Activated B cell treated with CpG ODN at 0.5 μM for 24 hours (primary cell): ENCODE measurements at regions of chr12 and their contacts with region 1.

Region 1: DNA sequence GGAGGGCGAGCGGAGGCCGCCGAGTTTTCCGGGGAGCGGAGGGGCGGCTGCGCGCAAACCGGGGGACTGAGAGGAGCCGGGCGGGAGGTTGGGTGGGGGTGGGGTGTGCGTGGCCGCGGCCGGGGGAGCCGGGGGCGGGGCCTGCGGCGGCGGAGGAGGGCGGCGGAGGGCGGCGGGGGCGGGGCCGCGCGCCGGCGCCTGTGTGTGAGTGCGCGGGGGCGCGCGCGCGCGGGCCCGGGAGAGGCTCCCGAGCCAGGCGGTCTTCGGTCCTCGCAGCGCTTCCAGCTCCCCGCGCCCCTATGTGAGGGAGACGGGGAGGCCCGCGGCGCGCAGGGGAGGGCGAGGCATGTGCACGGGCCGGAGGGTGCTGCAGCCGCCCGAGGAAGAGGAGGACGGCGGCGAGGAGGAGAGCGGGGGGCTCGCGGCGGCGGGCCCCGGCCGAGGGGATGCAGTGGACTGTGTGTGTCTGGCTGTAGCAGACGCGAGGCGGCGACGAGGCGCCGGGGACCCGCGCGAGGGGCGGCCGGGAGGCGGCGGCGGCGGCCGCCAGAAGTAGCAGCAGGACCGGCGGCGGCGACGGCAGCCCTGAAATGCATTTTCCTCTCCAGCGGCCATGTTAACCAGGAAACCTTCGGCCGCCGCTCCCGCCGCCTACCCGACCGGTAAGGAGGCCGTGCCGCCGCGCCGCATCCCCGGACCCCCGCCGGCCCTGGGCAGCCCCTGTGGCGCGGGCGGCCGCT is at the start of gene DYRK2:
- DNase-seq: peak; percentile 78
- ATAC-seq: peak; percentile 64
- H3K4me3 Mint-ChIP-seq: peak within 1 kb of the TSS; percentile 97
- H3K27ac Mint-ChIP-seq: peak within 1 kb of the TSS; percentile 87
- H3K4me1 Mint-ChIP-seq: peaks cover 33% of the 10 kb centered on the region
- H3K27me3 Mint-ChIP-seq: no peaks in the 10 kb centered on the region
- CTCF ChIP-seq: no peak
- total RNA-seq, gene DYRK2: 37.6 and 40.3 TPM in 2 replicates

Region 2: GRCh38 chr12:67452119-67452805 is 196.4 kb before region 1 on chr12:
- CTCF ChIA-PET with region 1: no interaction called
- POLR2A ChIA-PET with region 1: no interaction called
- intact Hi-C with region 1: loop called (anchors 1 kb)
- DNase-seq: no peak
- ATAC-seq: peak; percentile 60
- H3K4me3 Mint-ChIP-seq: peak overlapping the region; percentile 17
- H3K27ac Mint-ChIP-seq: peak overlapping the region; percentile 54
- H3K4me1 Mint-ChIP-seq: peaks cover 40% of the 10 kb centered on the region
- H3K27me3 Mint-ChIP-seq: peaks cover 12% of the 10 kb centered on the region
- CTCF ChIP-seq: no peak

Region 3: DNA sequence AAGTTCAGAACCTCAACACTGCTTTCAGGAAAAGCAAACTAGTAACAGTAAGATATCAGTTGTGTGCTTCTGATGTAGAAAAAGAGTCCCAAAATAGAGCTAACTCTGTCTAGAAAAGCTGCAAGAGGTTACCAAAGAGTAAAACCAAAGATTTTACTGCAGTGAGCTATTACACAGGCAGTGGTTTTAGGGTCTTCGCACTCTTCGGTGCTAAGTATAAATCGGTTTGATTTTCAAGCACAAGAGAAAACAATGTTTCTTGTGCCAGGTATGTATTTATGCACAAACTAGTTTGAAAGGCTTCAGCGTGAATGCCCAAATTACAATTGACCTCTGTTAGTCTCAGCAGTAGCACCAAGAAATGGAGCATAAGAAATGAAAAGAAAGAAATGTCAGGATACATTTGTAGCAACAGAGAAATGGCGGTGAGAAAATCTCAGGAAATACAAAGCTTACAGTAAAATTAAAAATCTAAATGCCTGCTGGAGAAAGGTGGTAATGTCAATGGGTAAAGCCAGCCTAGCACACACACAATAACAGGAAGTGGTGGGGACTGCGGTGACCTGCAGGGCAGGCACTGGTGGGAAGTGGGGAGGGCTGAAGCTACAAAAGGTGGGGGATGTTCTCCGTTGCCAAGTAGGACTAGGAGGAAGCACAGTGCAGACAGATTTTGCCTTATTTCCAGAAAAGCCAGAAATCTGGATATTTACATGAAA is 18.2 kb before region 1 on chr12:
- CTCF ChIA-PET with region 1: interaction called, 4 read pairs
- POLR2A ChIA-PET with region 1: interaction called, 55 read pairs
- intact Hi-C with region 1: loop called (anchors 1 kb)
- DNase-seq: peak; percentile 47
- ATAC-seq: peak; percentile 100
- H3K4me3 Mint-ChIP-seq: peak overlapping the region; percentile 61
- H3K27ac Mint-ChIP-seq: peak overlapping the region; percentile 87
- H3K4me1 Mint-ChIP-seq: peaks cover 64% of the 10 kb centered on the region
- H3K27me3 Mint-ChIP-seq: no peaks in the 10 kb centered on the region
- CTCF ChIP-seq: no peak

Region 4: GRCh38 chr12:67758119-67758518 is 109.4 kb after region 1 on chr12:
- CTCF ChIA-PET with region 1: no interaction called
- POLR2A ChIA-PET with region 1: no interaction called
- intact Hi-C with region 1: loop called (anchors 2 kb)
- DNase-seq: no peak
- ATAC-seq: peak; percentile 95
- H3K4me3 Mint-ChIP-seq: no peak overlapping the region
- H3K27ac Mint-ChIP-seq: no peak overlapping the region
- H3K4me1 Mint-ChIP-seq: peaks cover 25% of the 10 kb centered on the region
- H3K27me3 Mint-ChIP-seq: no peaks in the 10 kb centered on the region
- CTCF ChIP-seq: no peak

Region 5: DNA sequence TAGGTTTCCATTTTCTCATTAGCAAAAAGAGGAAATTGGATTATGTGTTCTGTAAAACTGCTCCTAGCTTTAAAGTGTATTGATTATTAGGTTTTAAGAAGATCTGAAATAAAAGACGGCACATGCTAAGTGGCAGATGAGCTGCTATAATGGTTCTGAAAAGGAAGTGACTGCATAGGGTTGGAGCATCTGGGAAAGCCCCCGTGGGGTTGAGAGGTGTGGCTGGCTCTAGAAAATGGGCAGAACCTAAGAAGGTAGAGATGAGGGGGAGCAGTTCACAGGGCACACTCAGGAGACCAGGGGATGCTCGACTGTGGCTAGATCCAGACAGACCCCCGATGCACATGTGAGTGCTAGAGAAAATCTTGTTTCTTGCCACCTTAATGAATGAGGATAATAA is 342.5 kb after region 1 on chr12:
- CTCF ChIA-PET with region 1: no interaction called
- POLR2A ChIA-PET with region 1: interaction called, 4 read pairs
- intact Hi-C with region 1: loop called (anchors 2 kb)
- DNase-seq: peak; percentile 32
- ATAC-seq: peak; percentile 90
- H3K4me3 Mint-ChIP-seq: peak overlapping the region; percentile 74
- H3K27ac Mint-ChIP-seq: peak overlapping the region; percentile 94
- H3K4me1 Mint-ChIP-seq: peaks cover 69% of the 10 kb centered on the region
- H3K27me3 Mint-ChIP-seq: no peaks in the 10 kb centered on the region
- CTCF ChIP-seq: no peak